Caco-2 (cell line): ENCODE measurements at regions of chr9 and their contacts with region 1.

Region 1: GRCh38 chr9:4662108-4662988 is at the start of gene PLPP6:
- DNase-seq: peak; percentile 89 to 90
- H3K4me3 ChIP-seq: peak within 1 kb of the TSS; percentile 79
- H3K4me3 Mint-ChIP-seq: peak within 1 kb of the TSS; percentile 75
- H3K27ac Mint-ChIP-seq: peak within 1 kb of the TSS; percentile 63
- H3K4me1 ChIP-seq: peaks cover 22% of the 10 kb centered on the region; the same call in 1 of the 2 replicates
- H3K4me1 Mint-ChIP-seq: peaks cover 16% of the 10 kb centered on the region
- H3K27me3 ChIP-seq: no peaks in the 10 kb centered on the region
- H3K27me3 Mint-ChIP-seq: no peaks in the 10 kb centered on the region
- CTCF ChIP-seq: peak; percentile 22 to 65
- total RNA-seq, gene PLPP6: 6.7 and 7.2 TPM in 2 replicates

Region 2: DNA sequence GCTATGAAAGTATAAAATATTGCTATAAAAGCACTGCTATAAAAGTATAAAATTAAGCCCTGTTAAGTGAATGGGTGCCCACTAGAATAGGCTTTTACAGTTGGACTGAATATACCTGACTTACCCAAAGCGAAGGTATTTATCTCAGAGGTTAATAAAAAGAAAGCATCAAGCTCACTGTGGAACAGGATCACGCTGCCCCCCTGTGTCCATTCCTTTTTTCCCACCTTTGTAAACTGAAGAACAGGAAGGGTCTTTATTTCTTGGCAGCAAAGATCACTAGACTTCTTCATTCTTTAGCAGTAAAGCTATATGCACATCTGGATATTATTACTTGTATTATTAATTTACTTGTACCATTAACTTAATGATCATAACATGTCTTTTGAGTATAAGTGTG is 22.3 kb before region 1 on chr9:
- CTCF ChIA-PET with region 1: no interaction called
- POLR2A ChIA-PET with region 1: interaction called, 13 read pairs
- intact Hi-C with region 1: no loop called
- DNase-seq: peak in 1 of 2 experiments; percentile 28
- H3K4me3 ChIP-seq: no peak overlapping the region
- H3K4me3 Mint-ChIP-seq: no peak overlapping the region
- H3K27ac Mint-ChIP-seq: no peak overlapping the region
- H3K4me1 ChIP-seq: no peaks in the 10 kb centered on the region
- H3K4me1 Mint-ChIP-seq: no peaks in the 10 kb centered on the region
- H3K27me3 ChIP-seq: no peaks in the 10 kb centered on the region
- H3K27me3 Mint-ChIP-seq: no peaks in the 10 kb centered on the region
- CTCF ChIP-seq: peak; percentile 21 to 45

Region 3: DNA sequence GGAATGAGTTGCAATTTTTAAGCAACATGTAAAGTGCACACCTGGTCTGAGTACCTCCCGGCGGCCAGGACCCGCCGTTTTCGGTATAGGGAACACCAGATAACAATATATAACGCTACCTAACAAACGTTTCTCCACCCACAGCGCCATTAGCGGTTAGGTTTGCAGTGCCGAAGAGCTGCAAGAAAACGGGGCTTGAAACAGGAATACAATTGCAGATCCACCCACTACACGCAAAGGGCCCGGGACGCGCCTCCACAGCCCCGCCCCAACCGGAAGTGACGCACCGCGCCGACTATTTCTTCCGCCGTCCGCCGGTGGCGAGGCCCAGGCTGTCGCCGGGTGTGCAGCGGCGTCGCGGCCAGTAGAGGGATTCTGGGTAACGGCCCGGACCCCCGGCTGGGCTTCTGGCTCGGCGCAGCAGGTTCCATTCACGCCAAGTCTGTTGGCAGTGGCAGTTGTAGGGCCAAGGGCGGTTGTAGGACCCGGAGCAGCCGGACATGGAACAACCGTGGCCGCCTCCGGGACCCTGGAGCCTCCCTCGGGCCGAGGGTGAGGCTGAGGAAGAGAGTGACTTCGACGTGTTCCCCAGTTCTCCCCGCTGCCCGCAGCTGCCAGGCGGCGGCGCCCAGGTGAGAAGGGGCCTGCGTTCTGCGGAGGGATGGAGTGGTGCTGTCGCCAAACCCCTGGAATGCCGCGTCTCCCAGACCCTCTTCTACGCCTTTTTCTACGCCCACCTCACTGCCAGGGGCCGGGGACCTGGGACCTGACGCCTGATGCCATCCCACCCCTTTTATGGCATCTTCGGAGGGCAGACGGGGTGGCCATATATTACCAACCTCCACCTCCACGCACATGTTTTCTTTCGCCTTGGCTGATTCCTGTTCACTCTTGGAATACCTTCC is 17.2 kb after region 1 on chr9 and contains the start of gene CDC37L1:
- CTCF ChIA-PET with region 1: interaction called, 7 read pairs
- POLR2A ChIA-PET with region 1: interaction called, 5 read pairs
- intact Hi-C with region 1: loop called (anchors 1 kb)
- DNase-seq: peak; percentile 95 to 96
- H3K4me3 ChIP-seq: peak within 1 kb of the TSS; percentile 89
- H3K4me3 Mint-ChIP-seq: no peak within 1 kb of the TSS
- H3K27ac Mint-ChIP-seq: no peak within 1 kb of the TSS
- H3K4me1 ChIP-seq: peaks cover 12% of the 10 kb centered on the region
- H3K4me1 Mint-ChIP-seq: no peaks in the 10 kb centered on the region
- H3K27me3 ChIP-seq: no peaks in the 10 kb centered on the region
- H3K27me3 Mint-ChIP-seq: no peaks in the 10 kb centered on the region
- CTCF ChIP-seq: peak; percentile 47 to 51
- total RNA-seq, gene CDC37L1: 8.7 and 9.3 TPM in 2 replicates

Region 4: GRCh38 chr9:4740638-4741364 is 78.5 kb after region 1 on chr9 and contains the start of gene AK3:
- CTCF ChIA-PET with region 1: interaction called, 3 read pairs
- POLR2A ChIA-PET with region 1: no interaction called
- intact Hi-C with region 1: loop called (anchors 5 kb)
- DNase-seq: peak; percentile 77 to 85
- H3K4me3 ChIP-seq: peak within 1 kb of the TSS; percentile 78
- H3K4me3 Mint-ChIP-seq: peak within 1 kb of the TSS; percentile 91
- H3K27ac Mint-ChIP-seq: peak within 1 kb of the TSS; percentile 86
- H3K4me1 ChIP-seq: peaks cover 3% of the 10 kb centered on the region; the same call in 1 of the 2 replicates
- H3K4me1 Mint-ChIP-seq: no peaks in the 10 kb centered on the region
- H3K27me3 ChIP-seq: no peaks in the 10 kb centered on the region
- H3K27me3 Mint-ChIP-seq: peaks cover 4% of the 10 kb centered on the region
- CTCF ChIP-seq: no peak
- total RNA-seq, gene AK3: 31.9 and 32.0 TPM in 2 replicates

Region 5: GRCh38 chr9:4792572-4793458 is 130.5 kb after region 1 on chr9 and contains the start of gene RCL1:
- CTCF ChIA-PET with region 1: no interaction called
- POLR2A ChIA-PET with region 1: no interaction called
- intact Hi-C with region 1: loop called (anchors 5 kb)
- DNase-seq: peak; percentile 92 to 96
- H3K4me3 ChIP-seq: peak within 1 kb of the TSS; percentile 91
- H3K4me3 Mint-ChIP-seq: peak within 1 kb of the TSS; percentile 98
- H3K27ac Mint-ChIP-seq: peak within 1 kb of the TSS; percentile 91
- H3K4me1 ChIP-seq: no peaks in the 10 kb centered on the region
- H3K4me1 Mint-ChIP-seq: peaks cover 6% of the 10 kb centered on the region
- H3K27me3 ChIP-seq: no peaks in the 10 kb centered on the region
- H3K27me3 Mint-ChIP-seq: peaks cover 2% of the 10 kb centered on the region
- CTCF ChIP-seq: no peak
- total RNA-seq, gene RCL1: 15.1 and 15.7 TPM in 2 replicates

Region 6: DNA sequence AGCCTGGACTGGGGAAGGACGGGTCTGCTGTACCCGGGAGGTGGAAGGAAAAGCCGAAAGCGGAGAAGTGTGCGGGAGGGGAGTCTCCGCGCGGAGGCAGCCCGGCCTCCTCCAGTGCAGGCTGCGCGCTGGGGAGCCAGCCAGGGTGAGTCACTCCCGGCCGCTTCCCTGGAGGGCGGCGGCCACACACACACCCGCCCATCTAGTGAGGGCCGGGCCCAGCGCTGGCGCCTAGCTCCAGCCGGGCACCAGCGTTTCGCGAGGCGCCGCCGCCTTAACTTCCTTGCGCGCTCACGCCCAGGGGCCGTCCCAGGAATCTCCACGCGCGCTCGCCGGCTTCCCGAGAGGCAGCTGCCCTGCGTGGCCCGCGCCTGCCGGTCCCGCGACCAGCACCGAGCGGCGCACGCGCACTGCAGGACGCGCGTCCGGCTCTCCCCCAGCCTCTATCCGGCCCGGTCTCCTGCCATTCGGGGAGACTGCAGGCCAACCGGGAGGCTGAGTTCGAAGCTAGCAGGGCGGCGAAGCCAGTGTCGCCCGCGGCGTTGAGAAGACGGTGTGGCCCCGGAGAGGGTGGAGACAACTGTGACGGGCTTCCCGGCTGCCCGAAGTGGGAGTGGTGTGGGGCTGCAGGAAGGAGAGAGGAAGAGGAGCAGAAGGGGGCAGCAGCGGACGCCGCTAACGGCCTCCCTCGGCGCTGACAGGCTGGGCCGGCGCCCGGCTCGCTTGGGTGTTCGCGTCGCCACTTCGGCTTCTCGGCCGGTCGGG is 322.5 kb after region 1 on chr9 and contains the start of gene JAK2:
- CTCF ChIA-PET with region 1: no interaction called
- POLR2A ChIA-PET with region 1: no interaction called
- intact Hi-C with region 1: loop called (anchors 10 kb)
- DNase-seq: peak; percentile 89 to 90
- H3K4me3 ChIP-seq: peak within 1 kb of the TSS; percentile 63
- H3K4me3 Mint-ChIP-seq: peak within 1 kb of the TSS; percentile 76
- H3K27ac Mint-ChIP-seq: peak within 1 kb of the TSS; percentile 87
- H3K4me1 ChIP-seq: peaks cover 3% of the 10 kb centered on the region; the same call in 1 of the 2 replicates
- H3K4me1 Mint-ChIP-seq: peaks cover 15% of the 10 kb centered on the region
- H3K27me3 ChIP-seq: no peaks in the 10 kb centered on the region
- H3K27me3 Mint-ChIP-seq: peaks cover 5% of the 10 kb centered on the region
- CTCF ChIP-seq: peak; percentile 18 to 28
- total RNA-seq, gene JAK2: 0.86 and 1.4 TPM in 2 replicates